ENCODE measurements at regions of chr5 and their contacts with region 1.

Region 1: GRCh38 chr5:141805874-141806595 is 72.2 kb downstream of the PCDH1 start:
- DNase-seq: no peak
- H3K4me3 ChIP-seq: no peak overlapping the region
- H3K27ac ChIP-seq: no peak overlapping the region
- H3K4me1 ChIP-seq: peaks cover 11 to 39% (median 17%) of the 10 kb centered on the region in 4 experiments
- H3K27me3 ChIP-seq: no peaks in the 10 kb centered on the region; a peak in 1 of 7 replicates
- CTCF ChIP-seq: no peak
- EP300 ChIP-seq: no peak
- POLR2A ChIP-seq: no peak
- RAD21 ChIP-seq: no peak

Region 2: DNA sequence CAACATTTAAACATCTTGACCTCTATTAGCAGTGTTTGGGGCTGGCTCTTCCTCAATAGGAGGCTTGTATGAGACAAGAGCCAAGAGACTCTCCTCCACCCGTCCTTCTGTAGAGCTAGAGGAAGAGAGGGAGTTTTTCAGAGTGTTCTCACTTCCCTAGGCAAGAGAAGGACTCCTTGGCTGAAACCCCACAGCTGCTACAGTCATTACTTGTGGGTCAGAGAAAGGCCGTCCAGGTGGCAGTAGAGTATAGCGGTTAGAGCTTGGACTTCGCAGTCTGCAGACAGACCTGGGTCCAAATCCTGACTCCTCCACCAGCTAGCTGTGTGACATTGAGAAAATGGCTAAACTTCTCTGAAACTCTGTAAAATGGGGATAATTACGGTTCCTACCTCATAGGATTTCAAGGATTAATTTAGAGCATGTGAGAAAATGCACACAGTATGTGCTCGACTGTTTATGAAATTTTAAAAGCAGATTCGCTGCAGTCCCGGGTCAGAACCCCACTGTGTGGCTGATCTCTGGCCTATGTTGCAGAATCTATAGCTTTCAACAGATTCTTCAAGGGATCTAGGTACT is 43.2 kb before region 1 on chr5:
- CTCF ChIA-PET with region 1: interaction called, 179 read pairs
- POLR2A ChIA-PET with region 1: interaction called, 9 read pairs
- DNase-seq: no peak
- H3K4me3 ChIP-seq: no peak overlapping the region
- H3K27ac ChIP-seq: no peak overlapping the region
- H3K4me1 ChIP-seq: peaks cover 10 to 24% (median 21%) of the 10 kb centered on the region in 4 experiments
- H3K27me3 ChIP-seq: no peaks in the 10 kb centered on the region; a peak in 1 of 7 replicates
- CTCF ChIP-seq: peak in 1 of 3 experiments; percentile 18; a peak in 1 of 4 replicates
- EP300 ChIP-seq: no peak
- POLR2A ChIP-seq: no peak
- RAD21 ChIP-seq: peak; percentile 37 to 58; a peak in 3 of 4 replicates